ENCODE measurements at regions of chr1 and their contacts with region 1.

Region 1: GRCh38 chr1:1399187-1399871 is at the start of gene CCNL2:
- DNase-seq: peak; percentile 99
- CTCF ChIP-seq: no peak

Region 2: DNA sequence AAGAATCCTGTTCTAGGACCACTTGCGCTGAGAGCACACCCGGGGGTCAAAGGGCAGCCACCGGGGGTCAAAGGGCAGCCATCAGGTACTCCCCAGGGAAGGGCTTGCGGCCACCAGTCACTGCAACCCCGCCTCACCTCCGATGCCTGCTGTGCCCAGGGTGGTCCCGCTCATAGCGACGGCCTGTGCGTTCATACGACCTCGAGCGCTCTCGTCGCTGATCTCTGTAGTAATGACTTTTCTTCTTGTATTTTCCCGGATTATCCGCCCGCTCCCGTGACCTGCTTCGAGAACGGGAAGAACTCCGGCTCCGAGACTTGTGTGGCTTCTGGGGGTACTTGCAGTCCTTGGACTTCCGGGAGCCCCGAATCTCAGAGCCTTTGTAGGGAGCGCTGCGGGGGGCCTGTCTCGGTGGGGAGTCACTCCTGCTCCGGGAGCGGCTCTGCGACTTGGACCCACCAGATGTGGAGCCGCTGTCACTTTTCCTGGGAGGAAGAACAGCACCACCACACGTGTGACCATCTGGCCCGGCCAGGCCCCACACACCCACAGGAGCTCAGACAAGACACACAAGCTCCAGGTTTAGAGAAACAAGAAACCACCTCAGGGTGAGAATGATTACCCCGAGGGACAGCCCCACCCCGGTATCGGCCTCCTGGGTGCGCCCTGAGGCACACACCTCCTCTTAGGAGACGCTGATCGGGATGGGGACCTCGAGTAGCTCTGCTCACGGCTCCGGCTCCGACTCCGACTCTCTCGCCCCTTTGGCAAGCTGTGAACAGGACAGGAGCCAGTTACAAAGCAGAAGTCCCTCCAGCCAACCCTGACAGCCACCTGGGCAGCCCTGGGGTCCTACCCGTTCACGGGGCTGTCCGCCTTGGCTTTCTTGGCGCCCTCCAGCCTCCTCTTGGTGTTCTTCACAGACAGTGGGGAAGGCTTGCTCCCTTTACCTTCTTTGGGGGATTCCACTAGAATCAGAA is 11.9 kb before region 1 on chr1:
- CTCF ChIA-PET with region 1: interaction called, 10 read pairs
- POLR2A ChIA-PET with region 1: interaction called, 8 read pairs
- DNase-seq: no peak
- CTCF ChIP-seq: no peak

Region 3: DNA sequence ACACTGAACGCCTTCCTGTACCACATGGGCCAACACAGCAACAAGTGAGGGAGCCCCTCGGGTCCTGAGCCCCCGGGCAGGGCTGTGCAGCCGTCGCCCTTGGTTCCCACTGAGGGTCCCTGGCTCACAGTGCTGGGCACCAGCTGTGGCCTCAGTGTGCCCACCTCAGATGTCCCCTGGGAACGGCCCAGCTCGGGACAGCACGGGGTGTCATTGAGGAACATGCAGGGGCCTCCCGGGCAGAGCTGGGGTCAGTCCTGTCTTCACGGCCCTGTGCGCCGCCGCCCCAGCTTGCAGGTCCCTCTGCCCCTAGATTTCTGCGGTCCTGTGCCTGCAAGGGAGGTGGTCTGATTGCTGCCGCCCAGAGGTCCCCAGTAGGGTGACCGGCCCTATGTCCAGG is 89.9 kb after region 1 on chr1:
- CTCF ChIA-PET with region 1: no interaction called
- POLR2A ChIA-PET with region 1: no interaction called
- DNase-seq: no peak
- CTCF ChIP-seq: no peak

Region 4: DNA sequence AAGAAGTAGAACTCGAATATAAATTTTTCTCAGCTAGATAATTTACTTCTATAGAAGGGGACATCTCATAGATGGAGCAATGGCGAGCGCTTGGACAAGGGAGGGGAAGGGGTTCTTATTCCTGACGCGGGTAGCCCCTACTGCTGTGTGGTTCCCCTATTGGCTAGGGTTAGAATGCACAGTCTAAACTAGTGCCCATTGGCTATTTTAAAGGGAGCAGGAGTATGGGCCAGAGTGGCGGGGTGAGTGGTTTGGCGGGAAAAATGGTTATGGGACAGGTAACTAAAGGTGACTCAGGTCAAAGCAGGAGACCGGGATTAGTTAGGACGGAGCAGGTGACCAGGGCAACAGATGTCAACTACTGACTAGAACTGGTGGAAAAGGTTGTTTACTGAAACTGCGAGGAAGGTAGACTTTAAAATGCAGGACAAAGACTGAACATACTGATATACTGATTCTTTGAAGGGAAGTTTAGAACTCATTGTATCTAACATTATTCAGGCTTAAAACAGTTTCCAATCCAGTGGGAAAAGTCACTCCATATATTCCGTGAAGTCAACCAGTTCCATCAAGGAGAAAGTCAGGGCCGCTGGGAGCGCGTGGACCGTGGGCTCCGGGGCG is 111.7 kb after region 1 on chr1:
- CTCF ChIA-PET with region 1: interaction called, 13 read pairs
- POLR2A ChIA-PET with region 1: no interaction called
- DNase-seq: no peak
- CTCF ChIP-seq: no peak